Caco-2 (cell line): ENCODE measurements at regions of chr5 and their contacts with region 1.

Region 1: DNA sequence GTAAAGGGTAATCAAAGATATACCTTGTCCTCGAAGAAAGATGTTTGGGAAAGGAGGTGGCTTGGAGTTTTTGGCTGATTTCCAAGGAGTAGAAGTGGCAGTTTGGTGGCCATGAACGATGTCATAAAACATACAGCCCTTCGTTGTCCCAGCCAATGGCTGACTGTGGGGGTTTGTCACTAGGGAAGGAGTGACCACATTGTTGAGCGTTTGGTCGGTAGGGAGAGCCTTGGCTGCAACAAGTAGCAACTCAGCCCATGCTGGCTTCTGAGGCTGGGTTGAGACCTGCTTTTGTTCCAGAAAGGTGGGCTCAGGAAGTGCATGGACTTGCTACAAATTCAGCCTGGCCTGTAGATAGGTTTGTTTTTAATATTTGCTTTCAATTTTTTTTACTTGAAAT is 128.3 kb downstream of the BOD1 start:
- DNase-seq: no peak
- H3K4me3 ChIP-seq: no peak overlapping the region
- H3K4me3 Mint-ChIP-seq: no peak overlapping the region
- H3K27ac Mint-ChIP-seq: no peak overlapping the region
- H3K4me1 ChIP-seq: no peaks in the 10 kb centered on the region
- H3K4me1 Mint-ChIP-seq: no peaks in the 10 kb centered on the region
- H3K27me3 ChIP-seq: no peaks in the 10 kb centered on the region
- H3K27me3 Mint-ChIP-seq: peaks cover 11% of the 10 kb centered on the region
- CTCF ChIP-seq: no peak

Region 2: DNA sequence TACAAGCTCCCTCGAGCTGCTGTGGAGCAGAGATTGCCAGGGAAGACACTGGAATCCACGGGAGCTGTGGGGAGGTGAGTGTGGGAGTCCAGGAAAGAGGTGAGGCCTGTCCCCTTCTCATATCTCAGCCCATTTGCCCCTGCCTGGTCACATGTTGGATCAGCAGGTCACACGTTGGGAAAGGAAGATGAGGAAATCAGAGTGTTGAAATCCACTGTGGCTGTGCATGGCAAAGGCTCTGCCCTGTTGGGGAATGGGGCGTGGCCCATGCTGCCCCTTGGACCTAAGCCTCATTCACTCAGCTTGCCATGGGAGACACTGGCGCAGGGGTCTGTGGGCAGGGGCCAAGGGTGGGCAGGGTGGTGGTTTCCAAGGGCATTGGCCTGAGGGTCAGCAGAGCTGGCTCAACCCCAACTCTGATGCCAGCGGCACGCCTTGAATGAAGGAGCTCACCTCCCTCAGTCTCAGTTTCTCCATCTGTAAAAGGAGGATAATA is 314.6 kb after region 1 on chr5:
- CTCF ChIA-PET with region 1: no interaction called
- POLR2A ChIA-PET with region 1: no interaction called
- intact Hi-C with region 1: no loop called
- DNase-seq: peak; percentile 65 to 79
- H3K4me3 ChIP-seq: no peak overlapping the region
- H3K4me3 Mint-ChIP-seq: no peak overlapping the region
- H3K27ac Mint-ChIP-seq: no peak overlapping the region
- H3K4me1 ChIP-seq: peaks cover 22% of the 10 kb centered on the region
- H3K4me1 Mint-ChIP-seq: peaks cover 7% of the 10 kb centered on the region
- H3K27me3 ChIP-seq: no peaks in the 10 kb centered on the region
- H3K27me3 Mint-ChIP-seq: no peaks in the 10 kb centered on the region
- CTCF ChIP-seq: no peak

Region 3: GRCh38 chr5:174245516-174246075 is 757.5 kb after region 1 on chr5:
- CTCF ChIA-PET with region 1: no interaction called
- POLR2A ChIA-PET with region 1: interaction called, 10 read pairs
- intact Hi-C with region 1: no loop called
- DNase-seq: no peak
- H3K4me3 ChIP-seq: no peak overlapping the region
- H3K4me3 Mint-ChIP-seq: no peak overlapping the region
- H3K27ac Mint-ChIP-seq: no peak overlapping the region
- H3K4me1 ChIP-seq: no peaks in the 10 kb centered on the region
- H3K4me1 Mint-ChIP-seq: no peaks in the 10 kb centered on the region
- H3K27me3 ChIP-seq: no peaks in the 10 kb centered on the region
- H3K27me3 Mint-ChIP-seq: peaks cover 18% of the 10 kb centered on the region
- CTCF ChIP-seq: no peak